ENCODE measurements at regions of chr17 and their contacts with region 1.

Region 1: DNA sequence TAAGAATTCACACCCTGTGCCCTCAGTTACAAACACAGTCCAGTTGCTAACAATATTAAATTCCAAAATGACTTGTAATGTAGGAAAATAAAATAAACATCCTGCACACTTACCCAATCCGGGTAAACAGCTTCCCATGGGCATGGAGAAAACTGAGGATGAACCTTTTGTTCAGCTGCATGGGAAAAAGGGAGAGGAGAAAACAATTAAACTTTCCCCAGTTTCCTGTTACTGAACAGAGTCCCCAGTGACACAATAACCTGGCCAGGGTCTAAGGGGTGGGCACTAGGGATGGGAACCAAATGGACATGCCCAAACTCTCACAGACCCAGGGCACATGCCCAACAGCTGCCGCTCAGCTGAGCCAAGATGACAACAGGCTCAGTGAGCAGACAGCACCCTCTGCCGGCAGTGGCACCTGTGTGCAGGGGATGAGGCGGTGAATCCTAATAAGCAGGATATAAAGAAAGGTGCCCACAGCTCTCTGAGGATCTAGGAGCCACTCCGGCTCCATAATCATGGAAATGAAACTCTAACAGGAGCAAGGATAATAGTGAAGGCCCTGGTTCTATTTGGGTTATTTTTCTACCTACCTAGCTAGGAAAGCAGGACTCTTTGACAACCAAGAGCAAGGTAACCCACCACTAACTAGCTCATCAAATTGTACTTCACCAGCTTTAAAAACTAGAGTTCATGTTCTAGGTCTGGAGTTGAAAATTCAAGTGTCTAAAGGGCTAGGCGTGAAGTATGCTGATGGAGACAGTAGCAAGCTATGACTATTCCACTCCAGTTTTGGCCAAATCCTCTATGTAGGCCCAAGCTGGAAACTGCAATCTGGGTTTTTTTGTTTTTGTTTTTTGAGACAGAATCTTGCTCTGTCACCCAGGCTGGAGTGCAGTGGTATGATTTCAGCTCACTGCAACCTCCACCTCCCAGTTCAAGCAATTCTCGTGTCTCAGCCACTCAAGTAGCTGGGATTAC is 58.8 kb downstream of the SMG6 start:
- DNase-seq: peak; percentile 50
- ATAC-seq: peak; percentile 94
- H3K4me3 ChIP-seq: no peak overlapping the region
- H3K27ac ChIP-seq: no peak overlapping the region
- H3K4me1 ChIP-seq: 0 out of 2 replicates have a peak, but pooled peaks cover 7% of the 10 kb centered on the region
- H3K27me3 ChIP-seq: no peaks in the 10 kb centered on the region
- CTCF ChIP-seq: peak; percentile 97
- EP300 ChIP-seq: no peak
- POLR2A ChIP-seq: no peak
- RAD21 ChIP-seq: peak; percentile 96

Region 2: DNA sequence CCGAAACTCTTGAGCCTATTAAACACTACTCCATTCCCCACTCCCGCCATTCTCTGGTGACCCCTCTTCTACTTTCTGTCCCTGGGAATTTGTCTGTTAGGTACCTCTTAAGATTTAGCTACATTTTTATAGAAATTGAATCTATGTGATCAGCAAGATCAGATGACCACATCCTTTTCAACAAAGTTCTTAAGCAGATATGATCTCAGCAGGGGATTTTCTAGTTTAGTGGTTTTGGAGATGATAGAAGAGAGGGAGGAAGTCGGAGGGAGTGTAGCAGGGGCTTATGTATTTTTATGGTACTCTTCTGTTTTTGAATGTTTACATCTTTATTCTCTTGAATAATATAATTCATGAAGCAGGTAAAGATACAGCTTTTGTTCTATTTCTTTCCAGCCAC is 374.2 kb before region 1 on chr17:
- CTCF ChIA-PET with region 1: no interaction called
- POLR2A ChIA-PET with region 1: no interaction called
- in situ Hi-C with region 1: no loop called
- intact Hi-C with region 1: loop called (anchors 5 kb)
- DNase-seq: no peak
- ATAC-seq: no peak
- H3K4me3 ChIP-seq: no peak overlapping the region
- H3K27ac ChIP-seq: no peak overlapping the region
- H3K4me1 ChIP-seq: no peaks in the 10 kb centered on the region
- H3K27me3 ChIP-seq: no peaks in the 10 kb centered on the region
- CTCF ChIP-seq: no peak
- EP300 ChIP-seq: no peak
- POLR2A ChIP-seq: no peak
- RAD21 ChIP-seq: no peak

Region 3: DNA sequence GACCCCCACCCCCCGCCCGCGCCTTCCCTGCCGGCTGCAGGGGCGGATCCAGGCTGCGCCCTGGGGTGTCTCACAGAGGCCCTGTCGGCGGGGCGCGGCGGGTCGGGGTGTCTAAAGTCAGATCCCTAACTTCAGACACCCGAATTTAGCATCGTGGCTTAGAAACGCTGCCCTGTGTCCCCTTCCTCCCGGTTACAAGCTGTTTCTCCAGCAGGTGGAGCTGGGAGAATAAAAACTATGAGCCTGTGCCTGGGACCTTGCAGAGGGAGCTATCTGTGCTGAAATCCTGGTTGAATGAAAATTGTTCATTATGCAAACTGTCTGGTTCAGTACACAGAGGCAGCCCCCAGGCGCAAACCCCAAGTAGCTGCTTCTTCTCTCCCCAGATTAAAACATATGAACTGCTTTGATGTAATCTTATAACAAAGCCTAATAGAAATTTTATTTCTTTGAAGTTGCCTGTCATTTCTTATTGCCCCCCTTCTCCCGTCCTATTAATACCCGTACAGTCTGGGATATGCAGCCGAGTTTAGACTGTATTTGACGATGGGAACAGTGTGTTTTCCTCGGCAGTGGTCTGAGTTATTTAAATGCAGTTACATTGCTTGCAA is 336.0 kb before region 1 on chr17:
- CTCF ChIA-PET with region 1: no interaction called
- POLR2A ChIA-PET with region 1: no interaction called
- in situ Hi-C with region 1: loop called (anchors 25 kb)
- intact Hi-C with region 1: no loop called
- DNase-seq: peak; percentile 72
- ATAC-seq: peak; percentile 79
- H3K4me3 ChIP-seq: no peak overlapping the region
- H3K27ac ChIP-seq: no peak overlapping the region
- H3K4me1 ChIP-seq: peaks cover 42% of the 10 kb centered on the region
- H3K27me3 ChIP-seq: peaks cover 1 to 47% of the 10 kb centered on the region in 2 experiments; a peak in 4 of 5 replicates
- CTCF ChIP-seq: peak; percentile 89
- EP300 ChIP-seq: no peak
- POLR2A ChIP-seq: no peak
- RAD21 ChIP-seq: peak; percentile 83

Region 4: DNA sequence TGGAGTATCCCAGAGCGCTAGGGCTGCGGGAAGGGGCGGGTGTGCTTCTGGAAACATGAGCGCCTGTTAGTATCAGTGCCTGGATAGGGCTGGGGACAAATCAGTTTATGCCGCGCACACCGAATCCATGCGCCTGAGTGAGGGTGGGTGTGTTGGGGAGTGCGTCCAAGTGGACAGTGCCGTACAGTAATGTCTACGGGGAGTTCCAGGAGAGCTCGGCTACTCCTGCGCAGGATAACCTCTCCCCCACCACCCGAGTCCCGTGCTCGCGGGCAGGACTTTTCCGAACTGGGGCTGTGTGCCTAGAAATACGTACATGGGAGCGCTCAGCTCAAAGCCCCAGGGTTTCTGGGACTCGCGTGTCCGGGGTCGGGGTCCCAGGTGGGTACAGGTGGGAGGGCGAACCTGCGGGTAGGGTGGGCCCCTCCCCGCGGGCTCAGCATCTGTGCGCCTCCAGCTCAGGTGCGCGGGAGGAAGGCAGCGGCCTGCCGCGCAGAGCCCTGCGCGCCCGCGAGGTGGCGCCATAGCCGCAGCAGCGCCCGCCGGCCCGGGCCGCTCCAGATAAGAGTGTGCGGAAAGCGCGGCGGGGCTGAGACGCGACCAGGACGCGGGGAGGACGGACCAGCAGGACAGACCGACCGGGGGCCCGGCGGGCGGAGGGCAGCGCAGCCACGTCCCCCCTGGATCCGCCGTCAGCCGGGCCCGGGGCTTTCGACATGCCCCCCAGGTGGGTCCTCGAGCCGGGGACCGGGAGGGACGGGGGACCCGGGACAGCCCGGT is 190.1 kb before region 1 on chr17 and contains the start of gene HIC1:
- CTCF ChIA-PET with region 1: interaction called, 37 read pairs
- POLR2A ChIA-PET with region 1: interaction called, 7 read pairs
- in situ Hi-C with region 1: no loop called
- intact Hi-C with region 1: loop called (anchors 1 kb)
- DNase-seq: peak; percentile 24
- ATAC-seq: peak; percentile 78
- H3K4me3 ChIP-seq: peak within 1 kb of the TSS; percentile 64 to 76 (median 65)
- H3K27ac ChIP-seq: no peak within 1 kb of the TSS
- H3K4me1 ChIP-seq: peaks cover 25% of the 10 kb centered on the region
- H3K27me3 ChIP-seq: peaks cover 4 to 25% of the 10 kb centered on the region in 2 experiments; a peak in 4 of 5 replicates
- CTCF ChIP-seq: peak; percentile 81
- EP300 ChIP-seq: no peak
- POLR2A ChIP-seq: no peak
- RAD21 ChIP-seq: peak; percentile 96
- total RNA-seq, gene HIC1: 0.31 TPM in 1 of 2 replicates, not detected in the other

Region 5: GRCh38 chr17:2094891-2095535 is 149.8 kb before region 1 on chr17:
- CTCF ChIA-PET with region 1: interaction called, 26 read pairs
- POLR2A ChIA-PET with region 1: interaction called, 7 read pairs
- in situ Hi-C with region 1: loop called (anchors 5 kb)
- intact Hi-C with region 1: loop called (anchors 1 kb)
- DNase-seq: peak; percentile 92
- ATAC-seq: peak; percentile 100
- H3K4me3 ChIP-seq: peak overlapping the region in 1 of 3 experiments; percentile 14; a peak in 1 of 6 replicates
- H3K27ac ChIP-seq: peak overlapping the region; percentile 81
- H3K4me1 ChIP-seq: peaks cover 39% of the 10 kb centered on the region
- H3K27me3 ChIP-seq: no peaks in the 10 kb centered on the region
- CTCF ChIP-seq: peak; percentile 98
- EP300 ChIP-seq: no peak
- POLR2A ChIP-seq: peak in 1 of 2 experiments; percentile 54; a peak in 2 of 4 replicates
- RAD21 ChIP-seq: peak; percentile 99

Region 6: GRCh38 chr17:2172077-2172851 is 72.6 kb before region 1 on chr17:
- CTCF ChIA-PET with region 1: no interaction called
- POLR2A ChIA-PET with region 1: no interaction called
- in situ Hi-C with region 1: no loop called
- intact Hi-C with region 1: loop called (anchors 5 kb)
- DNase-seq: peak; percentile 82
- ATAC-seq: no peak; the same call in 2 of the 3 replicates
- H3K4me3 ChIP-seq: no peak overlapping the region
- H3K27ac ChIP-seq: peak overlapping the region; percentile 10
- H3K4me1 ChIP-seq: peaks cover 59% of the 10 kb centered on the region
- H3K27me3 ChIP-seq: no peaks in the 10 kb centered on the region
- CTCF ChIP-seq: no peak
- EP300 ChIP-seq: no peak
- POLR2A ChIP-seq: no peak
- RAD21 ChIP-seq: no peak